CD8-positive, alpha-beta T cell (primary cell): ENCODE measurements at regions of chr12 and their contacts with region 1.

Region 1: DNA sequence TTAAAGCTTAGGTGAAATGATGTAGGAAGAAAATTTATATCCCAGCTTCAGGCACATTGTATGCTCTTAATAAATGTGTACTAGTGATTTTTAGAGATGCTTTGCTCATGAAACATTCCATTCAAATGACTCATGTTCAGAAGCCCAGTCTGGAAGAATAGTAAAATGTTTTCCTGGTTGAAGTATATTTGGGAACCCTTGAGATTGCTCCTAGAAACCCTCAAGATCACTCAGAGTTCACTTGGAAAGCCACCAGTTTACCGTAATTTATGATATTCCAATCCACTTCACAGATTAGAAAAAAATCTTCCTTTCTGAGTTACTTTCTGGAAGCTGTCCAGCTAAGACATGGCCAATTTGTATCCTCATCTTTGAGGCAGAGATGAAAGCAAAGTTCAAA is 186.4 kb downstream of the SYT10 start:
- DNase-seq: no peak
- ATAC-seq: no peak
- H3K4me3 ChIP-seq: no peak overlapping the region
- H3K4me3 Mint-ChIP-seq: no peak overlapping the region
- H3K27ac ChIP-seq: no peak overlapping the region
- H3K27ac Mint-ChIP-seq: no peak overlapping the region
- H3K4me1 ChIP-seq: no peaks in the 10 kb centered on the region
- H3K4me1 Mint-ChIP-seq: no peaks in the 10 kb centered on the region
- H3K27me3 ChIP-seq: no peaks in the 10 kb centered on the region
- H3K27me3 Mint-ChIP-seq: no peaks in the 10 kb centered on the region
- CTCF ChIP-seq: no peak

Region 2: DNA sequence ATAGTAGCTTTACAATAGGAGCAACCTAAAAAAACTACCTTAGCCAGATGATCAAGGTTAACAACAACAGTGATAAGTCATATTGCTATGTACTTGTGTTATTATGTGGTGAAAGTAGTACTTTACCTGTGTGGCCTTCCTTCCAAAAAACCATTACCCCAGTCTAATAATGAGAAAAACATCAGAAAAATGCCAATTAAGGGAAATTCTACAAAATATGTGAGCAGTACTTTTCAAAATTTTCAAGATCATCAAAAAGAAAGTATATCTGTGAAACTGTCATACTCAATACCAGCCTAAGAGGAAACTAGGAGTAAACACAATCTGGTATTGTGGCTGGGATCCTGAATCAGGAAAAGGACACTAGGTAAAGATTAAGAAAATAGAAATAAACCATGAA is 191.3 kb before region 1 on chr12:
- CTCF ChIA-PET with region 1: no interaction called
- POLR2A ChIA-PET with region 1: no interaction called
- intact Hi-C with region 1: no loop called
- DNase-seq: no peak
- ATAC-seq: no peak
- H3K4me3 ChIP-seq: no peak overlapping the region
- H3K4me3 Mint-ChIP-seq: no peak overlapping the region
- H3K27ac ChIP-seq: no peak overlapping the region
- H3K27ac Mint-ChIP-seq: no peak overlapping the region
- H3K4me1 ChIP-seq: no peaks in the 10 kb centered on the region
- H3K4me1 Mint-ChIP-seq: no peaks in the 10 kb centered on the region
- H3K27me3 ChIP-seq: no peaks in the 10 kb centered on the region
- H3K27me3 Mint-ChIP-seq: no peaks in the 10 kb centered on the region
- CTCF ChIP-seq: no peak

Region 3: DNA sequence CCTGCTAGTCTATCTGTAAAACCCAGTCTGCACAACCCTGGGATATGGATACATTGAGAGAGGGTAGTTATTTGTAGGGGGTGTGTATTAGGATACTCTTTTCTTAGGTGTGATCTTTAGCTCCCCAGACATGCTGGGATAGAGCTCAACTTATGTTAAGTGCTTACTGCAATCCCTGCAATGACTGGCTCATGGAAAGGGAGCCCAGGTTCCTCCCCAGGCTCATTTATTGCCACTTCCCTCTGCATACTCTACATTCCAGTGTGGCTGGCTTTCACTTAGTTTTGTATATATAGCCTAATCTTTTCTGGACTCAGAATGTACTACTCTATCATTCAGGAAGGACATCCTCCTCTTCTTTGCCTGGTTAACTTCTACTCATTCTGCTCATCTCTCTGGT is 14.5 kb after region 1 on chr12:
- CTCF ChIA-PET with region 1: no interaction called
- POLR2A ChIA-PET with region 1: no interaction called
- intact Hi-C with region 1: loop called in 1 of 2 experiments (anchors 2 kb)
- DNase-seq: no peak
- ATAC-seq: no peak
- H3K4me3 ChIP-seq: no peak overlapping the region
- H3K4me3 Mint-ChIP-seq: no peak overlapping the region
- H3K27ac ChIP-seq: no peak overlapping the region
- H3K27ac Mint-ChIP-seq: no peak overlapping the region
- H3K4me1 ChIP-seq: no peaks in the 10 kb centered on the region
- H3K4me1 Mint-ChIP-seq: no peaks in the 10 kb centered on the region
- H3K27me3 ChIP-seq: no peaks in the 10 kb centered on the region
- H3K27me3 Mint-ChIP-seq: no peaks in the 10 kb centered on the region
- CTCF ChIP-seq: no peak